ENCODE measurements at regions of chr1 and their contacts with region 1.

Region 1: DNA sequence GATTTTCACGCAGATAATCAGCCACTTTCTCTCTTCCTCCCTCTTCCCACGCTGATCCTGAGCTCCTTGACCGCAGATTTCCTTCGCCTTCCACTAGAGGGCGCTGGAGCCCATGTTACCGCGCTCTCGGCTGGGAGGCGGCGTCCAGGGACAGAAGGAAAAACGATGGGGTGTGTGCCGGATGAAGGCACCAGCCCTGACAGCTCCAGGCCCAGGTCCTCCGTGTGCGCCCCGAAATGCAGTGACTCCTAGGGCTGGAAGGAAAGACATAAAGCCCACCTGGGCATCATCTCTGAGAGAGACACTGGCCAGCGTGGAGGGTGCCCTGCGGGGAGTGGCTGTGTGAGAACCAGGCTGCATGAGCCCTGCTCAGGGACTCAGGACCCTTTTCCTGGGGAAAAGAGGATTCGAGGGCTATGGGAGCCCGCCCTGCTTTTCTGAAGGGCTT is 44.9 kb upstream of the CYP2J2 start:
- DNase-seq: peak; percentile 79
- ATAC-seq: peak; percentile 93
- H3K4me3 Mint-ChIP-seq: peak overlapping the region; percentile 52
- H3K27ac Mint-ChIP-seq: no peak overlapping the region
- H3K4me1 Mint-ChIP-seq: peaks cover 3% of the 10 kb centered on the region; the same call in 1 of the 2 replicates
- H3K27me3 Mint-ChIP-seq: peaks cover 9% of the 10 kb centered on the region
- CTCF ChIP-seq: peak; percentile 93

Region 2: DNA sequence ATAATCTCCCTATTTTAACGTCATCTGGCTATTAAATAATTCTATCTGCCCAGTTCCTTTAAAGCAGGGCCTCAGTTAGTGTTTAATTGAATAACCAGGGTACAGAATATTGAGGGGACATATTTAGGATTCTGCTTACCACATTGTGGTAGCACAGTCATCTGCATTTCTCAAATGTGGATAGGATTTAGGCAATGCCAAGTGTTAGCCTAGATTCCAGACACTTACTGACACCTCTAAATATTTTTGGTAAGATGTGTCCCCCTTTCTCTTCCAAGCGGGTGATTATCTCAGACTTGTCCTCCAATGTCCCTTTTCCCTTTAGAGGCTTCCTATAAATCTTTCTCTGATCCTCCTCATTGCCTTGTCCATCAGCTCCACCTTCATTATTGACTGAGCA is 317.5 kb before region 1 on chr1:
- CTCF ChIA-PET with region 1: no interaction called
- POLR2A ChIA-PET with region 1: no interaction called
- DNase-seq: no peak
- ATAC-seq: no peak
- H3K4me3 Mint-ChIP-seq: peak overlapping the region; percentile 18
- H3K27ac Mint-ChIP-seq: peak overlapping the region; percentile 34
- H3K4me1 Mint-ChIP-seq: peaks cover 19% of the 10 kb centered on the region
- H3K27me3 Mint-ChIP-seq: no peaks in the 10 kb centered on the region; the same call in 1 of the 2 replicates
- CTCF ChIP-seq: no peak

Region 3: GRCh38 chr1:59767119-59767518 is 204.4 kb before region 1 on chr1:
- CTCF ChIA-PET with region 1: no interaction called
- POLR2A ChIA-PET with region 1: no interaction called
- DNase-seq: no peak
- ATAC-seq: no peak
- H3K4me3 Mint-ChIP-seq: no peak overlapping the region
- H3K27ac Mint-ChIP-seq: no peak overlapping the region
- H3K4me1 Mint-ChIP-seq: peaks cover 16% of the 10 kb centered on the region
- H3K27me3 Mint-ChIP-seq: no peaks in the 10 kb centered on the region
- CTCF ChIP-seq: no peak

Region 4: DNA sequence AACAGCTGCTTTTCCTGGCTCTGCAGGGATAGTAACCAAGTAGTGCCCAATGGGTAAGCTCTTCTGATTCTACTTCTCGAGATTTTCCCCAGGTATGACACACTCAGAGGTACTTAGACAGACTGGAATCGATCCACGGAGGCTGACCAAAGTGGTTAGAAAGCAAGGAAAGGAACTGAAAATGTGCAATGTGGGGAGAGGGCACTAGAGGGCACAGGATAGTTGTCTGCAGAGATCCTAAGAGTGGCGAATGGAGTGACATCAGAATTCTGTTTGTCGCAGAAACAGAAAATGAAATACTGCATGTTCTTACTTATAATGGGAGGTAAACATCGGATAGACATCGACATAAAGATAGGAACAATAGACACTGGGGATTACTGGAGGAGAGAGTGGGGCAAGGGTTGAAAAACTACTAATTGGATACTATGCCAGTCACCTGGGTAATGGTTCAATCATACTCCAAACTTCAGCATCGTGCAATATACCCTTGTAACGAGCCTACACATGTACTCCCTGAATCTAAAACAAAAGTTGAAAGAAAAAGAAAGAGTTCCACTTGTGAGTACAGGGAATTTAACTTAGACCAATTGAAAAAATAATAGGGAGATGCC is 68.2 kb before region 1 on chr1:
- CTCF ChIA-PET with region 1: no interaction called
- POLR2A ChIA-PET with region 1: no interaction called
- DNase-seq: peak; percentile 34
- ATAC-seq: peak; percentile 79
- H3K4me3 Mint-ChIP-seq: no peak overlapping the region
- H3K27ac Mint-ChIP-seq: no peak overlapping the region
- H3K4me1 Mint-ChIP-seq: peaks cover 7% of the 10 kb centered on the region
- H3K27me3 Mint-ChIP-seq: no peaks in the 10 kb centered on the region
- CTCF ChIP-seq: peak; percentile 46; the same call in 1 of the 2 replicates

Region 5: DNA sequence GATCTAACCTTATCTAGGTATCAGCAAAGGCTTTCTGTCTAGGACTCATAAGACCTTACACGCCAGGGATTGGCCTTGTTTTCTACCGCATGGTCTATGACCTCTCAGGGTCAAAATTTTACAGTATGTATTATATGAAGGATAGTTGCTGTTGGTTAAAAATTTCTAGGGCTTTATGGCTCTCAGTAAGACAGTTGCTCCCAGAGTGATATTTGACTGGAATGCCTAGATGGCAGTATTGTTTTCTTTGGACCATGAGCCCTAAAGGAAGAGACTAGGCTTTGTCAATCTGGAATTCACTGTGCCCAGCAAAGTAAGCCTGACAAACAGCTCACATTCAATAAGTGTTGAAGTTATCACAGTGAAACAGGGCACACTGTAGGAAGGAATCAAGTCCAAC is 64.4 kb after region 1 on chr1:
- CTCF ChIA-PET with region 1: interaction called, 12 read pairs
- POLR2A ChIA-PET with region 1: no interaction called
- DNase-seq: no peak
- ATAC-seq: peak; percentile 47; the same call in 1 of the 2 replicates
- H3K4me3 Mint-ChIP-seq: no peak overlapping the region
- H3K27ac Mint-ChIP-seq: no peak overlapping the region
- H3K4me1 Mint-ChIP-seq: no peaks in the 10 kb centered on the region
- H3K27me3 Mint-ChIP-seq: peaks cover 2% of the 10 kb centered on the region; the same call in 1 of the 2 replicates
- CTCF ChIP-seq: no peak

Region 6: DNA sequence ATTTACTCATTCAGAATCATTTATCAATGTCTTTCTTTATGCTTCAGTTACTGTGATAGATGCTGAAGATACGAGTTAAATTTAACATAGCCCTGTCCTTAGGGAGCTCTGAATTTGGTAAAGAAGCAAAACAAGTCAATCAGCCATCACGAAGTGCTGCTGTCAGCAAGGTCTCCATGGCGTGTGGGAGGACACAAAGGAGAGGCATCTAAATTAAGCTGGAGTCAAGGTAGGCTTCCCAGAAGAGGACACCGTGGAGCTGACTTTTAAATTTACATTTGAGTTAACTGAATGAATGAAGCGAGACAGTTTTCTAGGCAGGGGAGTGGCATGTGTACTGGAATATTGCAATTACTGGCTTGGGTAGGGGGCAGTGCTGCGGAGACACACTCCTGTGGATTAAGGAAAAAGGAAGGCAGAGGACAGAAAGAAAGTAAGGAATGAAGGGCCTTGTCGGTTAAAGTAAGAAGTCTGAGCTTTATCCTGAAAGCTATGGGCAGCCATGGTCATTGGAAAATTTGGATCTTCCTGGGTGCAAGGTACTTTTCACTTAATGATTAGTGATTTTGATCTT is 143.3 kb after region 1 on chr1:
- CTCF ChIA-PET with region 1: interaction called, 22 read pairs
- POLR2A ChIA-PET with region 1: no interaction called
- DNase-seq: peak; percentile 8
- ATAC-seq: peak; percentile 75
- H3K4me3 Mint-ChIP-seq: no peak overlapping the region
- H3K27ac Mint-ChIP-seq: peak overlapping the region; percentile 30; the same call in 1 of the 2 replicates
- H3K4me1 Mint-ChIP-seq: peaks cover 8% of the 10 kb centered on the region
- H3K27me3 Mint-ChIP-seq: no peaks in the 10 kb centered on the region
- CTCF ChIP-seq: no peak

Region 7: GRCh38 chr1:60149251-60149650 is 177.8 kb after region 1 on chr1:
- CTCF ChIA-PET with region 1: interaction called, 15 read pairs
- POLR2A ChIA-PET with region 1: no interaction called
- DNase-seq: no peak
- ATAC-seq: peak; percentile 36; the same call in 1 of the 2 replicates
- H3K4me3 Mint-ChIP-seq: no peak overlapping the region
- H3K27ac Mint-ChIP-seq: no peak overlapping the region
- H3K4me1 Mint-ChIP-seq: peaks cover 22% of the 10 kb centered on the region
- H3K27me3 Mint-ChIP-seq: no peaks in the 10 kb centered on the region
- CTCF ChIP-seq: no peak

Region 8: GRCh38 chr1:60281360-60281932 is 310.0 kb after region 1 on chr1:
- CTCF ChIA-PET with region 1: interaction called, 10 read pairs
- POLR2A ChIA-PET with region 1: no interaction called
- DNase-seq: peak; percentile 72
- ATAC-seq: peak; percentile 100
- H3K4me3 Mint-ChIP-seq: no peak overlapping the region
- H3K27ac Mint-ChIP-seq: no peak overlapping the region
- H3K4me1 Mint-ChIP-seq: peaks cover 13% of the 10 kb centered on the region
- H3K27me3 Mint-ChIP-seq: no peaks in the 10 kb centered on the region
- CTCF ChIP-seq: peak; percentile 70

Measured in WTC11 (cell line).